Endothelial cell of umbilical vein (primary cell): ENCODE measurements at regions of chr12 and their contacts with region 1.

Region 1: DNA sequence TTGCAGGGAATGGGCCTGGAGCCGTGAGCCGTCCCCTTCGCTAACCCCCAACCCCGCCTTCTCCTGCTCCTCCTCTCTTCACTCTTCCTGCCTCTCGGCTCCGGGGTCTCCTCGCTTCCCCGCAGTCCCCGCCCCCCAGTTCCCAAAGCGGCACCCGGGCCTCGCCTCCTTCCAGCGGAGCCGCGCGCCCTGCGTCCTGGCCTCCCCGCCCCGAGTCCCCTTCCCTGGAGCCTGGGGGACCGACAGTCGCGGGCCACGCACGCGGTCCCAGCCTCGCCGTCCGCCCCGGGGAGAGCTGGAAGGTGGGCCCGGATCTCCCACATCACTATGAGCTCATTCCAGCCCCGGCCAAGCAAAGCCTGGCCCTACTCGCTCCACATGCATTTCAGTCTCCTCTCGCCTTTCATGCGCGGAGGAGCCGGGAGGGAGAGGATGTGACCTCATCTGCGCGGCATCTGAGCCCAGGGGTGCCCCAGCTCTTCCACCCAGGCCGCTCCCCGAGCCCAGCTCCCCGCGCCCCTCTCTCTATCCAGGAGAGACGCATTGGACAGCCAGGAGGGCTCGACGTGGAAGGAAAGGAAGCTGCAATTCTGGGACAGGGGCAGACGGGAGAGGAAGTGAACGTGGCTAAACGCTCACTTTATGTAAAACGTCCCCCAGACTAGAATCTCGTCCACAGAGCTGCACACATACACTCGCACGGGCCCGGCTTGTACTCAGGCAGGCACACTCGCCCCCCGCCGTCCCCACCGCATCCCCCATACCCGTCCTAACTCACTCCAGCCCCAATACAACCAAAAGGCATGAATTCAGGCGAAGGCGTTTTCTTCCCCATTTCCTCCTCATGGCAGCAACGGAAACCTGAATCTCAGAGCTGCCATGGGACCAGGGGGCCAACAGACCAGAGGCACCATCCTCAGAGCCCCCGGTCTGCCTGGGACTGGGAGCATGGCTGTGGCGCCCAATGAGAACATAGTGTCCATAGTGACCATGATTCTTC is 108.7 kb upstream of the CCND2 start:
- DNase-seq: peak; percentile 54
- H3K4me3 ChIP-seq: peak overlapping the region in 2 of 3 experiments; percentile 19 to 38
- H3K27ac ChIP-seq: no peak overlapping the region
- H3K4me1 ChIP-seq: no peaks in the 10 kb centered on the region
- H3K27me3 ChIP-seq: no peaks in the 10 kb centered on the region
- CTCF ChIP-seq: no peak
- POLR2A ChIP-seq: no peak

Region 2: GRCh38 chr12:3896801-3897331 is 268.0 kb before region 1 on chr12:
- CTCF ChIA-PET with region 1: no interaction called
- POLR2A ChIA-PET with region 1: no interaction called
- dilution Hi-C with region 1: no loop called
- intact Hi-C with region 1: loop called (anchors 10 kb)
- DNase-seq: no peak
- H3K4me3 ChIP-seq: no peak overlapping the region
- H3K27ac ChIP-seq: no peak overlapping the region
- H3K4me1 ChIP-seq: no peaks in the 10 kb centered on the region
- H3K27me3 ChIP-seq: peaks cover 0 to 2% of the 10 kb centered on the region in 2 experiments
- CTCF ChIP-seq: no peak
- POLR2A ChIP-seq: no peak

Region 3: GRCh38 chr12:4107436-4107878 is 57.4 kb before region 1 on chr12:
- CTCF ChIA-PET with region 1: interaction called, 4 read pairs
- POLR2A ChIA-PET with region 1: no interaction called
- dilution Hi-C with region 1: no loop called
- intact Hi-C with region 1: loop called (anchors 1 kb)
- DNase-seq: peak; percentile 50
- H3K4me3 ChIP-seq: no peak overlapping the region
- H3K27ac ChIP-seq: no peak overlapping the region
- H3K4me1 ChIP-seq: no peaks in the 10 kb centered on the region
- H3K27me3 ChIP-seq: peaks cover 0 to 5% of the 10 kb centered on the region in 2 experiments
- CTCF ChIP-seq: peak; percentile 63 to 64
- POLR2A ChIP-seq: no peak

Region 4: DNA sequence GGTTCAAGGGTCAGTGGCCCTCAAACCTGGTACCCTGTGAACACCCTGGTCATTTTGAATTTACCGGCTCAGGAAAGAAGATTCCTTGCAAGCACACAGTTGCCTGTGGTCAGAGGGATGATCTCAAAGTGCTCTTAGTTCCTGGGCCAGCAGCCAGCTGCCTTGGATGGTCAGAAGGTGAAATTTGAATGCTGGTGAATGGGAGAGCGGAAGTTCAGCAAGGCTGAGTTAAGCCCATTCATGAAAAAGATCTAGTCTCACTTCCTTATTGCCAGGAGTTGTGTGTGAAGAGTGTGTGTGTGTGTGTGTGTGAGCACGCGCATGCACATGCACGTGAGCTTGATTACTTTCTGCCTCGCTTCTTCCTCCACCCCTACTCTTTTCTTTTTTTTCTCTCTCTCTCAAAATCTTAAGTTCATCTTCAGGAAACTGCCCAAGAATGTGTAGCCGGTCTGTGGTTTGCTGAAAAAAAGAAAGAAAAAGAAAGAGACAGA is 46.8 kb before region 1 on chr12:
- CTCF ChIA-PET with region 1: no interaction called
- POLR2A ChIA-PET with region 1: no interaction called
- dilution Hi-C with region 1: no loop called
- intact Hi-C with region 1: loop called (anchors 1 kb)
- DNase-seq: no peak
- H3K4me3 ChIP-seq: no peak overlapping the region
- H3K27ac ChIP-seq: no peak overlapping the region
- H3K4me1 ChIP-seq: no peaks in the 10 kb centered on the region
- H3K27me3 ChIP-seq: no peaks in the 10 kb centered on the region
- CTCF ChIP-seq: no peak
- POLR2A ChIP-seq: no peak

Region 5: DNA sequence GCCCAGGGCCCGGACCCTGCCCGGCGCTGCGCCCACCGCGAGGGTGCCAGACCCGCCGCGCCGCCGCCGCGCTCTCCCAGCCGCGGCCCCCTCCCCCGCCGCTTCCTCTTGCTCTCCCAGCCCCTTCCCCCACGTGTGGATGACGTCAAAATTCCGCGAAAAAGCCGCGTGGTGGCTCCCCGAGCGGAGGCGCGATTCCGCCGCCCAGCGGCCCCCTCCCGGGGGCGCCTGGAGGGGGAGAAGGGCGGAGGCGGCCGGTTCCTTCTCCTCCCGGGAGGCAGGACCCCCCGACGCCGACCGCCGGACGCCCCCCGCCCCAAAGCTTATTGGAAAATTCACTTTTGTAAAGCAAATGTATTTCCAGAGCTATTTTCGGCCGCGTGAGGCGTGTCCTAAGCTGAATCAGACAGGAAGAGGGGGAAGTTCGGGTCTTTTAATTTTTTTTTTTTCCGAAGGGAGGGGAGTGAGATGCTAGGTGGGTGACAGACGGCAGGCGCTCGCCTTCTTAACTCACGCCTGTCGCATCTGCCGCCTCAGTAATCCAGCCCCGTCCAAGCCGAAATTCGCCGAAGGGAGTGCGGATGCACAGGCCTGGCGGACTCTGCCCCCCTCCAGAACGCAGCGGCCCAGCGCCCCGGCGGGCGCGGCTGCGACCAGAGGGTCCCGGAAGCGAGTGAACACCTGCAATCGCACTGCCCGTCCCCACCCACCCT is 104.6 kb after region 1 on chr12:
- CTCF ChIA-PET with region 1: no interaction called
- POLR2A ChIA-PET with region 1: no interaction called
- dilution Hi-C with region 1: no loop called
- intact Hi-C with region 1: loop called (anchors 2 kb)
- DNase-seq: peak; percentile 65
- H3K4me3 ChIP-seq: peak overlapping the region; percentile 31 to 61 (median 44)
- H3K27ac ChIP-seq: no peak overlapping the region
- H3K4me1 ChIP-seq: peaks cover 41% of the 10 kb centered on the region
- H3K27me3 ChIP-seq: peaks cover 52 to 77% of the 10 kb centered on the region in 2 experiments
- CTCF ChIP-seq: peak in 1 of 2 donors; percentile 21
- POLR2A ChIP-seq: peak; percentile 39